GM10248 (cell line): ENCODE measurements at regions of chr18 and their contacts with region 1.

Region 1: GRCh38 chr18:72762515-72763122 is 105.2 kb downstream of the NETO1 start:
- DNase-seq: peak; percentile 29
- CTCF ChIP-seq: peak; percentile 53

Region 2: GRCh38 chr18:72727038-72727655 is 35.5 kb before region 1 on chr18:
- CTCF ChIA-PET with region 1: no interaction called
- POLR2A ChIA-PET with region 1: no interaction called
- DNase-seq: no peak
- CTCF ChIP-seq: no peak

Region 3: GRCh38 chr18:72752220-72752619 is 10.4 kb before region 1 on chr18:
- CTCF ChIA-PET with region 1: interaction called, 16 read pairs
- POLR2A ChIA-PET with region 1: no interaction called
- DNase-seq: no peak
- CTCF ChIP-seq: no peak

Region 4: DNA sequence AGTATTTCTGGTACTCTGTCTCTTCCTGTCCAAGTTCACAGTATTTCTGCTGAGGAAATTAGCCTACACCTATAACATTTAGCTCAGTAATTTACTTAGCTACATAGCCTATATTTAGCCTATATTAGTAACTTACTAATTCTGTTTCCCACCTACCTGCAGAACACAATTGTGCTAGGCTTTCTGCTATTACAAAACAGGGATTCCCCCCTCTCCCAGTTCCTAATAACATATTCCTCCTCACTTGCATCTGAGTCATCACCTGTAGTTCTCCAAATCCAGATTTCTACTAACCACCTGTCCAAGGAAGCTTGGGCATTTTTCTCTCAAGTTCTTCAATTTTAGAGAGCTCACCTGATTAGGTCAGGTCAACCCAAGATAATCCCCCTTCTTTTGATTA is 10.3 kb after region 1 on chr18:
- CTCF ChIA-PET with region 1: interaction called, 28 read pairs
- POLR2A ChIA-PET with region 1: no interaction called
- DNase-seq: no peak
- CTCF ChIP-seq: no peak

Region 5: GRCh38 chr18:73136134-73136533 is 373.5 kb after region 1 on chr18:
- CTCF ChIA-PET with region 1: interaction called, 39 read pairs
- POLR2A ChIA-PET with region 1: no interaction called
- DNase-seq: peak; percentile 14
- CTCF ChIP-seq: peak; percentile 40

Region 6: DNA sequence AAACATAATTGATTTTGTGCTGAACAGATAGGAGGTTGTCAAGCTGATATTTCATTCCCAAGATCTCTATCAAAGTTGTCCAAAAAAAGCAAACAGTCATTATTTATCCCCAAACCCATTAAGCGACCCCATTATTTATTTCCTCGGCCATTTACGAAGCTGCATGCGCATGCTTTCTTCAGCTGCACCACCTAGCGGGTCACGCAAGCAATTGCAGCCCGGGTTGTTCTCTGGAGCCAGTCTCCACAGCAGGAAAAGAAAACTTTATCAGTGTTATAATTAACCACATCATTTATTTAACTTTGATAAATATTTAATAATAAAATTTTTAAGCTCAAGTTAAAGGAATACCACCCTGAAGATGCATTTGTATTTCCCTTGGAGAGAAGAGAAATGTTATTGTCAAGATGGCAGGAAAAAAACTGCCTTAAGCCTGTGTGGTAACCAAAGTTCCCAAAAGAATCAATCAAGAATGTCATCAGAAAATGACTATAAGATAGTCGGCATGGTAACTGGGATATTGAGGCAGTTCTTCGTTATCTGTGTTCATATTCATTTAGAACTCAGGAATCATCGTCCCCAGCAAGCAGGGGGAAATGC is 1080.3 kb after region 1 on chr18:
- CTCF ChIA-PET with region 1: interaction called, 35 read pairs
- POLR2A ChIA-PET with region 1: no interaction called
- DNase-seq: peak; percentile 46
- CTCF ChIP-seq: peak; percentile 95